ENCODE measurements at regions of chr17 and their contacts with region 1.

Region 1: GRCh38 chr17:45021607-45022287 is 29.7 kb downstream of the DCAKD start:
- DNase-seq: peak; percentile 67 to 93
- ATAC-seq: peak; percentile 63 to 86
- H3K4me3 ChIP-seq: peak overlapping the region; percentile 16; the same call in 1 of the 3 replicates
- H3K27ac ChIP-seq: peak overlapping the region; percentile 55 to 76
- H3K4me1 ChIP-seq: peaks cover 24% of the 10 kb centered on the region
- CTCF ChIP-seq: peak; percentile 99
- EP300 ChIP-seq: no peak
- POLR2A ChIP-seq: no peak; the same call in 1 of the 2 replicates
- RAD21 ChIP-seq: peak; percentile 76 to 96

Region 2: GRCh38 chr17:44766525-44766996 is 255.2 kb before region 1 on chr17:
- CTCF ChIA-PET with region 1: interaction called, 27 read pairs
- POLR2A ChIA-PET with region 1: no interaction called
- DNase-seq: no peak
- ATAC-seq: peak; percentile 4 to 13; a peak in 3 of 6 replicates
- H3K4me3 ChIP-seq: no peak overlapping the region
- H3K27ac ChIP-seq: no peak overlapping the region
- H3K4me1 ChIP-seq: no peaks in the 10 kb centered on the region
- CTCF ChIP-seq: no peak
- EP300 ChIP-seq: no peak
- POLR2A ChIP-seq: no peak
- RAD21 ChIP-seq: no peak

Region 3: DNA sequence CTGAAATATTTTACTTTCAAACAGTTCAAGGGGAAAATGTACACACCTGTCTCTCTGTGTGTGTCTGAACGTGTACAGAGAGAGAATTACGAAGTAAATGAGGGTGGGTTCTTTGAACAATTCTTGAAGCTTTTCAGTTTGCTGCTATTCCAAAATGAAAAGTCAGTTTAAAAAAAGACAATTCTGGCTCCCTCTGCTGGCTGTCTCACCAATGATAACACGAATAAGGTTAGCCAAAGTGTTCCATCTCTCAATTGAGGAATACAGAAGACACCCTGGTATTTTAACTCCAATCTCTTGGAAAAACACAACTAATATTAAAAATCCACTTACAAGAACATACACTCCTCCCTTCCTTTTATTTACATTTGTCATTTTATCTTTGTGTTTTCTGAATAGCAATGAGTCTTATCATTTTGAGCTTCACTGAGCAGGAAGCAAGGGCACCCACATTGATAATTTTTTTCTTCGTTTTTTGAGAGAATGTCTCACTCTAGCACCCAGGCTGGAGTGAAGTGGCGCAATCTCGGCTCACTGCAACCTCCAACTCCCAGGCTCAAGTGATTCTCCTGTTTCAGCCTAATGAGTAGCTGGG is 143.0 kb before region 1 on chr17:
- CTCF ChIA-PET with region 1: interaction called, 74 read pairs
- POLR2A ChIA-PET with region 1: no interaction called
- DNase-seq: peak; percentile 45 to 80
- ATAC-seq: peak; percentile 80 to 85; a peak in 5 of 6 replicates
- H3K4me3 ChIP-seq: no peak overlapping the region
- H3K27ac ChIP-seq: no peak overlapping the region
- H3K4me1 ChIP-seq: no peaks in the 10 kb centered on the region
- CTCF ChIP-seq: peak; percentile 94
- EP300 ChIP-seq: no peak
- POLR2A ChIP-seq: no peak
- RAD21 ChIP-seq: peak; percentile 54

Region 4: GRCh38 chr17:44947461-44948314 is 74.1 kb before region 1 on chr17 and contains the start of gene KIF18B:
- CTCF ChIA-PET with region 1: interaction called, 1,853 read pairs
- POLR2A ChIA-PET with region 1: no interaction called
- DNase-seq: peak; percentile 99 to 100
- ATAC-seq: peak; percentile 97 to 98
- H3K4me3 ChIP-seq: peak within 1 kb of the TSS; percentile 75
- H3K27ac ChIP-seq: peak within 1 kb of the TSS; percentile 87 to 94
- H3K4me1 ChIP-seq: peaks cover 17% of the 10 kb centered on the region
- CTCF ChIP-seq: no peak; the same call in 2 of the 3 replicates
- EP300 ChIP-seq: 0 out of 5 replicates have a peak, but pooled peaks of 1 of the 2 experiments have one; percentile 6
- POLR2A ChIP-seq: peak; percentile 96
- RAD21 ChIP-seq: peak; percentile 25 to 43; a peak in 3 of 5 replicates
- polyA plus RNA-seq, gene KIF18B: 19.6 and 20.5 TPM in 2 replicates

Region 5: GRCh38 chr17:44968226-44969143 is 53.3 kb before region 1 on chr17 and contains the start of gene C1QL1:
- CTCF ChIA-PET with region 1: interaction called, 21 read pairs
- POLR2A ChIA-PET with region 1: interaction called, 3 read pairs
- DNase-seq: peak; percentile 90 to 96
- ATAC-seq: peak; percentile 76 to 91
- H3K4me3 ChIP-seq: peak within 1 kb of the TSS; percentile 59
- H3K27ac ChIP-seq: peak within 1 kb of the TSS; percentile 65 to 82
- H3K4me1 ChIP-seq: peaks cover 35% of the 10 kb centered on the region
- CTCF ChIP-seq: no peak
- EP300 ChIP-seq: no peak
- POLR2A ChIP-seq: peak; percentile 31; the same call in 1 of the 2 replicates
- RAD21 ChIP-seq: no peak
- polyA plus RNA-seq, gene C1QL1: 1.9 and 2.6 TPM in 2 replicates

Region 6: DNA sequence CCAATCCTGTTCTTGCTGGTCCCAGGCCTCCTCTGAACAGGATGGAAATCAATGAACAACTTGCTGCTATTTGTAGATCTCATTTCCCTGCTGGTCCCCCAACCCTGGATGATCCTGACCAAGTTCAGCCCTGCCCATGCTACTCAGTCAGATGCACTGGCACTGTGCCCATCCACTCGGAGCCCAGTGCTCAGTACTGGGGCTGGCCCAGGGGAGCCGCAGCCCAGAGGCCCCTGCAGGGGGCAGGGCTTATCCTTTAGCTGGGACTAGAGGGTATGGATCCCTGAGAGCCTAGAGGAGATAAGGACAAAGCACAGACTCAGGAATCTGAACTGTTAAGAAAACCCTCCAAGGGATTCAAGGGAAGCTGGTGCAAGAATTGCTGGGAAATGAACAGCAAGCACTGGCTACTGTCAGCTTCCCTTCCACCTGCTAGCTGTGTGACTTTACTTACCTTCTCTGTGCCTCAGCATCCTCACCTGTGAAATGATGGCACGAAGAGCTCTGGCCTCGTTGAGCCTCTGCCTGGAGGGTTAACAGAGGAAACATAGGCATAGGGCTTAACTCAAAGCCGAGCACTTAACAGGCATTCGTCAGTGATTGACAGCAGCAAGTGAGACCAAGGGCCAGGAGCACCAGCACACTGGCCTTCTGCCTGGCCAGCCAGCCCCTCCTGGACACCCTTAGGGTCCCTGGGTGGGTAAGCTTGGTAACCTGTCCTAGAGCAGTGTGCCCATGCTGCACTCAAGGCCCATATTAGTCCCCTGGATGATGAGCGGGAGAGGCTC is 23.8 kb before region 1 on chr17:
- CTCF ChIA-PET with region 1: interaction called, 169 read pairs
- POLR2A ChIA-PET with region 1: no interaction called
- DNase-seq: no peak
- ATAC-seq: peak in 1 of 2 experiments; percentile 39; a peak in 3 of 6 replicates
- H3K4me3 ChIP-seq: no peak overlapping the region
- H3K27ac ChIP-seq: no peak overlapping the region
- H3K4me1 ChIP-seq: no peaks in the 10 kb centered on the region
- CTCF ChIP-seq: no peak
- EP300 ChIP-seq: no peak
- POLR2A ChIP-seq: no peak
- RAD21 ChIP-seq: no peak

Region 7: GRCh38 chr17:45060797-45061605 is 39.3 kb after region 1 on chr17 and contains the start of gene NMT1:
- CTCF ChIA-PET with region 1: interaction called, 13 read pairs
- POLR2A ChIA-PET with region 1: interaction called, 4 read pairs
- DNase-seq: peak; percentile 99 to 100
- ATAC-seq: peak; percentile 97
- H3K4me3 ChIP-seq: peak within 1 kb of the TSS; percentile 67
- H3K27ac ChIP-seq: peak within 1 kb of the TSS; percentile 87 to 91
- H3K4me1 ChIP-seq: peaks cover 16% of the 10 kb centered on the region
- CTCF ChIP-seq: no peak
- EP300 ChIP-seq: no peak
- POLR2A ChIP-seq: peak; percentile 91
- RAD21 ChIP-seq: no peak
- polyA plus RNA-seq, gene NMT1: 82.9 and 95.8 TPM in 2 replicates

Region 8: GRCh38 chr17:45148183-45149036 is 126.7 kb after region 1 on chr17 and contains the start of gene HEXIM1:
- CTCF ChIA-PET with region 1: no interaction called
- POLR2A ChIA-PET with region 1: no interaction called
- DNase-seq: peak; percentile 99 to 100
- ATAC-seq: peak; percentile 74 to 86
- H3K4me3 ChIP-seq: peak within 1 kb of the TSS; percentile 74
- H3K27ac ChIP-seq: peak within 1 kb of the TSS; percentile 97 to 98
- H3K4me1 ChIP-seq: peaks cover 27% of the 10 kb centered on the region
- CTCF ChIP-seq: no peak
- EP300 ChIP-seq: no peak
- POLR2A ChIP-seq: peak; percentile 100
- RAD21 ChIP-seq: peak in 1 of 2 experiments; percentile 7; a peak in 1 of 5 replicates
- polyA plus RNA-seq, gene HEXIM1: 39.3 and 54.0 TPM in 2 replicates

Region 9: DNA sequence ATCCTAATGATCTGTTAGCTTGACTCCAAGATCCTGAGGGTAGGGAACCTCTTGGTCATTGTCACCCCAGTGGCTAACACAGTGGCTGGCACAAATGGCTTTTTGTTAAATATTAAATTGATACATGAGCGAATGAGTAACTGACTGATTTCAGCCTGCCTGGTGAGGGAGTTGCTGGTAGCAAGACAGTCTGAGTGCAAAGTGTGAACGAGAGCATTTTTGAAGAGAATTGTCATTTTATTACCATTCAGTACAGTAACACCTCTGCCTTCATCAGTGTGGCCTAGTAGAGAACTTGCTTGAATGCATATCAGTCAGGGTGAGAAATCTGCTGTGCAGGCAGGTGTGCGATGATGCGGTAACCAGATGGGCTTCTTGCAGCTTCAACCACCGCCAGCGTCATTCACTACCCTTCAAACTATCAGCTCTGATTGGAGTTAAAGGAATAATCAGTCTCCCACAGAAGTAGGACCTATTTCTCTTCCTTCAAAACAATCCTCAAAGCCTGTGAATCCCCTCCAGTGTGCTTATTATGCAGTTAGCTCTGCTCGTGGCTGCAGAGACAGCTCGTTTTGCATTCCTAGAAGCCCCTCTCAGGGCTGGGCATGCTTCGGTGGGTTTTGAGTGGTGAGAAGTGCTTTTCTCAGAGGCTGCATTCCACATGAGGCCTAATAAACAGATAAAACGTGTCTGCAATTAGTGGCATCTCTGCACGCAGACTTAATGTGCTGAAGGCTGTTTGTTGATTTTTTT is 168.9 kb after region 1 on chr17:
- CTCF ChIA-PET with region 1: no interaction called
- POLR2A ChIA-PET with region 1: no interaction called
- DNase-seq: no peak
- ATAC-seq: peak in 1 of 2 experiments; percentile 52; a peak in 1 of 6 replicates
- H3K4me3 ChIP-seq: no peak overlapping the region
- H3K27ac ChIP-seq: peak overlapping the region; percentile 58 to 86
- H3K4me1 ChIP-seq: peaks cover 48% of the 10 kb centered on the region
- CTCF ChIP-seq: no peak
- EP300 ChIP-seq: no peak
- POLR2A ChIP-seq: no peak
- RAD21 ChIP-seq: no peak

Region 10: GRCh38 chr17:45317112-45317928 is 295.6 kb after region 1 on chr17:
- CTCF ChIA-PET with region 1: no interaction called
- POLR2A ChIA-PET with region 1: no interaction called
- DNase-seq: peak; percentile 100
- ATAC-seq: peak; percentile 79 to 83
- H3K4me3 ChIP-seq: peak overlapping the region; percentile 69
- H3K27ac ChIP-seq: peak overlapping the region; percentile 95
- H3K4me1 ChIP-seq: peaks cover 73% of the 10 kb centered on the region
- CTCF ChIP-seq: no peak
- EP300 ChIP-seq: no peak
- POLR2A ChIP-seq: peak; percentile 68
- RAD21 ChIP-seq: no peak